ENCODE measurements at regions of chr4 and their contacts with region 1.

Region 1: DNA sequence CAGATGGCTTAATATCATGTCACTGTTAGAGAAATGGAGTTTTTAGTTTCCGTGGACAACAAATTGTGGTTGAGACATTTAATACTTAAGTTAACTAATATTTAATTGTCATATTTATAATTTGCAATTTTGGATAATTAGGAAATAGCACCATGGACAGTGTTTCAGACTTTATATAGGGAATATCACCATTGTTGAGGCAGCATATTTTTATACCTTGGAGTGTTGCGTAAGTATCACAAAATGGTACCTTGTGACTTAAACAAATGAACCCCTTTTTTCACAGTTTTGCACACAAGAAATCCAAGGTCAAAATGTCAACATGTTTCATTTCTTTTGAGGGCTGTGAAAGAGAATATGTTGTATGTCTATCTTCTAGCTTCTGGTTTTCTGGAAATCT is 539.9 kb downstream of the TECRL start:
- DNase-seq: no peak
- H3K4me3 ChIP-seq: no peak overlapping the region
- H3K27ac ChIP-seq: no peak overlapping the region
- H3K4me1 ChIP-seq: no peaks in the 10 kb centered on the region
- H3K27me3 ChIP-seq: no peaks in the 10 kb centered on the region
- CTCF ChIP-seq: no peak
- EP300 ChIP-seq: no peak
- POLR2A ChIP-seq: no peak

Region 2: GRCh38 chr4:63814171-63814964 is 55.0 kb before region 1 on chr4:
- in situ Hi-C with region 1: no loop called
- intact Hi-C with region 1: no loop called
- DNase-seq: no peak
- H3K4me3 ChIP-seq: no peak overlapping the region
- H3K27ac ChIP-seq: no peak overlapping the region
- H3K4me1 ChIP-seq: no peaks in the 10 kb centered on the region
- H3K27me3 ChIP-seq: no peaks in the 10 kb centered on the region
- CTCF ChIP-seq: no peak
- EP300 ChIP-seq: no peak
- POLR2A ChIP-seq: no peak

Region 3: GRCh38 chr4:64489628-64490027 is 620.3 kb after region 1 on chr4:
- in situ Hi-C with region 1: no loop called
- intact Hi-C with region 1: loop called (anchors 5 kb)
- DNase-seq: no peak
- H3K4me3 ChIP-seq: no peak overlapping the region
- H3K27ac ChIP-seq: no peak overlapping the region
- H3K4me1 ChIP-seq: no peaks in the 10 kb centered on the region
- H3K27me3 ChIP-seq: no peaks in the 10 kb centered on the region
- CTCF ChIP-seq: no peak
- EP300 ChIP-seq: no peak
- POLR2A ChIP-seq: no peak

Measured in transverse colon (tissue), 4 donors.